ENCODE measurements at regions of chr16 and their contacts with region 1.

Region 1: GRCh38 chr16:29842732-29843346 is 20.2 kb downstream of the CDIPT start:
- DNase-seq: no peak
- ATAC-seq: no peak
- H3K4me3 Mint-ChIP-seq: no peak overlapping the region
- H3K27ac Mint-ChIP-seq: peak overlapping the region in 8 of 10 donors; percentile 13 to 90 (median 60)
- H3K4me1 Mint-ChIP-seq: peaks cover 0 to 9% (median 4%) of the 10 kb centered on the region in 4 donors
- H3K27me3 Mint-ChIP-seq: no peaks in the 10 kb centered on the region

Region 2: DNA sequence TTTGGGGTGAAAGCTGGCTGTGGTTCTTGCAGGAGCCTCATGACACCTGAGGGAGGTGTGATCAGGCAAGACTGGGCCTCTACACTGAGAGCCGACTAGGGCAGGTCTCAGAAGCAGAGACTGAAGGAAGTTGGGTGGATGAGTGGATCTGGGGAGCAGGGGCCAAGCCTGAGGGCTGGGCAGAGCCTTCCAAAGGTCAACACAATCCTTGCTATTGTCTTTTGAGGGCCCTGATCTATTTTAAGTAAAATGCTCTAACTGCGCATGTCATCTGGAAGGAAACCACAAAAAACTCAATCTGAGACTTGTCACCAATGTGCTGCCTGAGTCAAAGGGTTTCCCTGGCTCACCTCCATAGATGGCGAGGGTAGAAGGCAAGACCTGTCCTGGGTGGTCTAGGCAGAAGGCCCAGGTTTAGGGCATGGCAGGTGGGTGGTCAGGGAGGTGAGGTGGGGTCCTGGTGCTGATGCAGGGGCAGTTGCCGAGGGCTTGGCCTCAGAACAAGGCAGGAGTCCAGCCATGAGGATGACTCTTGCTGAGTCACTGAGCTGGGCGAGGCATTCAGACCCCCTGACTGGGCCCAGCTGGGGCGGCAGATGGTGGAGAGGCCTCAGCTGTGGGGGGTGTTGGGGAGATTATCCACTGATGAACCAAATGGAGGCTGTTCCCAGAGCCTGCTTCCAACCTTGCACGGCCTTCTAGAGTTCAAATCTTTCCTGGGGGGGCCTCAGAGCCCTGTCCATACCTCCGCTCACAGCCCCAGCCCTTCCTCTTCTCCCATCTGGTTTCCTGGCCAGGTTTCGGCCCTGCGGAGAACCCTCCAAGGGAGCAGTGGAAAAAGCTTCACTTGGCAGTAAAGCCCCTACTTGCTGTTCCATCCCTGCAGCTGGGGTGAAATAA is 17.4 kb before region 1 on chr16:
- POLR2A ChIA-PET with region 1: interaction called, 102 read pairs
- DNase-seq: peak in 3 of 10 donors; percentile 44 to 61 (median 47)
- ATAC-seq: peak in 1 of 2 donors; percentile 12
- H3K4me3 Mint-ChIP-seq: peak overlapping the region; percentile 65 to 86 (median 81)
- H3K27ac Mint-ChIP-seq: peak overlapping the region; percentile 72 to 99 (median 95)
- H3K4me1 Mint-ChIP-seq: peaks cover 17 to 89% (median 77%) of the 10 kb centered on the region in 4 donors
- H3K27me3 Mint-ChIP-seq: no peaks in the 10 kb centered on the region

Measured in naive thymus-derived CD8-positive, alpha-beta T cell (primary cell).